ENCODE measurements at regions of chr19 and their contacts with region 1.

Region 1: DNA sequence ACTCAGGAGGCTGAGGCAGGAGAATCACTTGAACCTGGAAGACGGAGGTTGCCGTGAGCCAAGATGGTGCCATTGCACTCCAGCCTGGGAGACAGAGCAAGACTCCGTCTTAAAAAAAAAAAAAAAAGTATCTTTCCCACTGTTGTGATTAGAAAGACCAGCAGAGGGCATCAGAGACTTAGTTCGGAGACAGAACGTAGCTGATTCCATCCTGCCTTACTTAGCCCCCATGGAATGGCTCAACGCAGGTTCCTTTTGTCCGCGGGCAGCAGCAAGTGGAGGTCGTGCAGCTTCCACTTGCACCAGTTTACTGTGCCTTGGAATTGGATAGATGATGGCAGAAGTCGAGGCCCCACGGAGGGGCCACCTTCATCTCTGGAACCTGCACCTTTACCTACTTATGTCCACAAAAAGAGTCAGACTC is 8.1 kb downstream of the TIMM29 start:
- DNase-seq: peak in 6 of 7 donors; percentile 52 to 73 (median 62)
- H3K4me3 ChIP-seq: no peak overlapping the region
- H3K27ac ChIP-seq: no peak overlapping the region
- H3K4me1 ChIP-seq: no peaks in the 10 kb centered on the region
- H3K27me3 ChIP-seq: no peaks in the 10 kb centered on the region
- CTCF ChIP-seq: peak; percentile 39 to 84 (median 70)
- POLR2A ChIP-seq: no peak

Region 2: GRCh38 chr19:11019824-11020223 is 83.2 kb after region 1 on chr19:
- intact Hi-C with region 1: loop called (anchors 5 kb)
- DNase-seq: no peak
- H3K4me3 ChIP-seq: no peak overlapping the region
- H3K27ac ChIP-seq: peak overlapping the region in 1 of 5 donors; percentile 87
- H3K4me1 ChIP-seq: peaks cover 7 to 18% of the 10 kb centered on the region in 2 donors
- H3K27me3 ChIP-seq: no peaks in the 10 kb centered on the region
- CTCF ChIP-seq: no peak
- POLR2A ChIP-seq: no peak

Region 3: GRCh38 chr19:11115895-11116446 is 179.3 kb after region 1 on chr19:
- intact Hi-C with region 1: loop called in 1 of 2 experiments (anchors 5 kb)
- DNase-seq: no peak
- H3K4me3 ChIP-seq: no peak overlapping the region
- H3K27ac ChIP-seq: peak overlapping the region in 2 of 5 donors; percentile 0 to 38
- H3K4me1 ChIP-seq: no peaks in the 10 kb centered on the region
- H3K27me3 ChIP-seq: no peaks in the 10 kb centered on the region
- CTCF ChIP-seq: no peak
- POLR2A ChIP-seq: no peak

Measured in adrenal gland (tissue), 19 donors.